Motor neuron (in vitro differentiated cells): ENCODE measurements at regions of chr12 and their contacts with region 1.

Region 1: DNA sequence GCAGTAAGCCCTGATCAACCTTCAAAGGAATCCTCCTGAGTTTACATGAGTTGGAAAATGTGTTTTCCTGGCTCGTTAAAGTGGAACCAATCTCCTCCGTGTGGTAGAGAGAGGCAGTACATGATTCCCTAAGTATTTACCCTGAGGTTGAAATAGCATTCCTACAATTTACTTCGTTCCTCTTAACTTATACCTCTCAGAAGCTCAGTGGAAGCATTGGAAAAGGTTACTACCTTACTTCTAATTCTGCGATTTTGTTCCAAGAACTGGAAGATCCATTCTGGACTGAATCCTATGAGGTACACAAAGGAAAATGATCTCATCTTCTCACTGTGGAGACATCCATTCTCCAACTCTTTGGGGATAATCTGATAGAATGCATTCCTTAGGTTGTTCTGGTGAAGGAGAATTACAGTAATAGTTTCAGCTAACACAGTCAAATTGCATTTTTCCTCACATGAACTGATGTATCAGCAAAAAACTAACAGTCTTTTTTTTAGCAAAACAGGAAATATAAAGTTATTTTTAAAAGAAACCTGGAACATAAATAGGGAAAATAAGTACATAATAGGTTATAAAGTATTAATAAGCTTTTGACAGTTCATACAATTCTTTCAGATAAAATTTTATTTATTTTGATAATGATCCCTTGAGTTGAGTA is 475.6 kb downstream of the PDZRN4 start:
- ATAC-seq: peak in 4 of 8 experiments; percentile 40 to 87 (median 57)
- H3K4me3 ChIP-seq: no peak overlapping the region
- H3K27ac ChIP-seq: no peak overlapping the region
- H3K4me1 ChIP-seq: peaks cover 4 to 7% of the 10 kb centered on the region in 2 donors

Region 2: DNA sequence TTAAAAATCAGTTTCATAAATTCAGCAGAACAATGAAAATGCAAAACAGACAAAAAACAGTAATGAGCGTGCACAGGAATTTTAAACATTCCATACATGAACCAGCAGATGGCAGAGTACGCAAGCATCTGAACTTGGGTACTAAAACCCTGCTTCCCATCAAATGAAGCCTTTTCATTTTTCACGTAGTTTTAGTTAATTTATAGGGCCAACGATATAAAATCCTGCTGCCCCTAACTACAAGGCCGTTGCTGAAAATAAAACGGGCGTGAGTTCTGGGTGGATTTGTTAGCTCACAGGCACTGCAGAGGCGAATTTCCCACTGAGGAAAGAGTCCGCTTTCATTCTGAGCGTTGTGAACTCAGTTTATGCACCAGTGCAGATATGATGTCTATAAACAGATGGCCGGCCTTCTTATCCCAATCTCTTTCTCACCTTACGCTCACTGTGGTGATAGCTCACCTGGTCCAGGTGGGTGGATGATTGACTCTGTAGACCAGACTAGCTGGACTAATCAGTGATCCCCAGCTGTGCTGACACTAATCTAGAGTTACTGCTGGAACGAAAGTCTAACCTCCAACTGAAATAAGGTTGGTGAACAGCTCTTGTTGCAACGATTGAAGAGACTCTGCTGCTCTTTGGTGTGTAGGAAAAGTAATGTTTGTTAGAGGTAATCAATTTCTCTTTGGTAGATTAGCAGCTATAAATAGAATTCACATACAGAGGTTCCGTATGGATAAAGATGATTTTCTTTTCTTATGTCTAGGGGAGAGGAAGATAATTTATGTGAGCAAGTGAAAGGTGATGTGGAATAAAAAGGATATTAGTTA is 386.4 kb before region 1 on chr12:
- in situ Hi-C with region 1: loop called in 3 of 9 experiments (anchors 25 kb)
- ATAC-seq: peak; percentile 20 to 65 (median 54)
- H3K4me3 ChIP-seq: no peak overlapping the region
- H3K27ac ChIP-seq: peak overlapping the region in 1 of 2 donors; percentile 33
- H3K4me1 ChIP-seq: peaks cover 12 to 24% of the 10 kb centered on the region in 2 donors

Region 3: GRCh38 chr12:41486718-41487117 is 177.0 kb before region 1 on chr12:
- in situ Hi-C with region 1: loop called in 1 of 9 experiments (anchors 25 kb)
- ATAC-seq: no peak
- H3K4me3 ChIP-seq: no peak overlapping the region
- H3K27ac ChIP-seq: no peak overlapping the region
- H3K4me1 ChIP-seq: no peaks in the 10 kb centered on the region